K562 (cell line): ENCODE measurements at regions of chr13 and their contacts with region 1.

Region 1: GRCh38 chr13:73417015-73417623 is 358.3 kb downstream of the KLF5 start:
- DNase-seq: peak in 3 of 4 experiments; percentile 6 to 34 (median 32)
- ATAC-seq: peak; percentile 97
- H3K4me3 ChIP-seq: peak overlapping the region; percentile 19; the same call in 1 of the 2 replicates
- H3K27ac ChIP-seq: no peak overlapping the region
- H3K4me1 ChIP-seq: no peaks in the 10 kb centered on the region
- H3K27me3 ChIP-seq: no peaks in the 10 kb centered on the region
- CTCF ChIP-seq: peak; percentile 20 to 50 (median 40); a peak in 4 of 6 replicates
- EP300 ChIP-seq: no peak
- POLR2A ChIP-seq: no peak
- RAD21 ChIP-seq: peak; percentile 42 to 55

Region 2: GRCh38 chr13:72808917-72809500 is 608.1 kb before region 1 on chr13:
- CTCF ChIA-PET with region 1: no interaction called
- POLR2A ChIA-PET with region 1: no interaction called
- in situ Hi-C with region 1: loop called (anchors 25 kb)
- intact Hi-C with region 1: no loop called
- DNase-seq: peak in 3 of 4 experiments; percentile 9 to 12 (median 12)
- ATAC-seq: peak; percentile 36; the same call in 1 of the 3 replicates
- H3K4me3 ChIP-seq: no peak overlapping the region
- H3K27ac ChIP-seq: no peak overlapping the region; the same call in 2 of the 3 replicates
- H3K4me1 ChIP-seq: peaks cover 0 to 2% of the 10 kb centered on the region in 2 experiments; a peak in 1 of 5 replicates
- H3K27me3 ChIP-seq: no peaks in the 10 kb centered on the region
- CTCF ChIP-seq: peak in 1 of 3 experiments; percentile 42; a peak in 2 of 6 replicates
- EP300 ChIP-seq: no peak
- POLR2A ChIP-seq: no peak
- RAD21 ChIP-seq: no peak

Region 3: GRCh38 chr13:73505376-73505890 is 88.3 kb after region 1 on chr13:
- CTCF ChIA-PET with region 1: no interaction called
- POLR2A ChIA-PET with region 1: no interaction called
- in situ Hi-C with region 1: no loop called
- intact Hi-C with region 1: no loop called
- DNase-seq: no peak
- ATAC-seq: no peak
- H3K4me3 ChIP-seq: no peak overlapping the region
- H3K27ac ChIP-seq: no peak overlapping the region
- H3K4me1 ChIP-seq: no peaks in the 10 kb centered on the region
- H3K27me3 ChIP-seq: no peaks in the 10 kb centered on the region; a peak in 1 of 5 replicates
- CTCF ChIP-seq: no peak
- EP300 ChIP-seq: no peak
- POLR2A ChIP-seq: no peak
- RAD21 ChIP-seq: no peak

Region 4: DNA sequence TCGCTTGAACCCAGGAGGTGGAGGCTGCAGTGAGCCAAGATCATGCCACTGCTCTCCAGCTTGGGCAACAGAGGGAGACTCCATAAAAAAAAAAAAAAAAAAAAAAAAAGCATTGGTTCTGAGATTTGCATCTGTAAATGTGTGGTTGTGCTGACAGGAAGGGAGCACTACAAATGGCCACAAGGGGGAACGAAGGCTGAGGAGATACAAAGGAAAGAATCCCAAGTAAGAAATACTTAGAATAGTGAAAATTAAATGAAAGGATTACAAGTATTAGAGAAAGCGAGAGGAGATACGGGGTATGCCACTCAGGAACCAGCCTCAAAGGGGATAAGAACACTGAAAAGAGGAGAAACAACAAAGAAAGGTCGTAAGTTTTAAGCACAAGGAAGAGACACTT is 432.2 kb after region 1 on chr13:
- CTCF ChIA-PET with region 1: no interaction called
- POLR2A ChIA-PET with region 1: no interaction called
- in situ Hi-C with region 1: no loop called
- intact Hi-C with region 1: no loop called
- DNase-seq: no peak
- ATAC-seq: no peak
- H3K4me3 ChIP-seq: no peak overlapping the region
- H3K27ac ChIP-seq: no peak overlapping the region
- H3K4me1 ChIP-seq: no peaks in the 10 kb centered on the region
- H3K27me3 ChIP-seq: no peaks in the 10 kb centered on the region
- CTCF ChIP-seq: no peak
- EP300 ChIP-seq: no peak
- POLR2A ChIP-seq: no peak
- RAD21 ChIP-seq: no peak

Region 5: DNA sequence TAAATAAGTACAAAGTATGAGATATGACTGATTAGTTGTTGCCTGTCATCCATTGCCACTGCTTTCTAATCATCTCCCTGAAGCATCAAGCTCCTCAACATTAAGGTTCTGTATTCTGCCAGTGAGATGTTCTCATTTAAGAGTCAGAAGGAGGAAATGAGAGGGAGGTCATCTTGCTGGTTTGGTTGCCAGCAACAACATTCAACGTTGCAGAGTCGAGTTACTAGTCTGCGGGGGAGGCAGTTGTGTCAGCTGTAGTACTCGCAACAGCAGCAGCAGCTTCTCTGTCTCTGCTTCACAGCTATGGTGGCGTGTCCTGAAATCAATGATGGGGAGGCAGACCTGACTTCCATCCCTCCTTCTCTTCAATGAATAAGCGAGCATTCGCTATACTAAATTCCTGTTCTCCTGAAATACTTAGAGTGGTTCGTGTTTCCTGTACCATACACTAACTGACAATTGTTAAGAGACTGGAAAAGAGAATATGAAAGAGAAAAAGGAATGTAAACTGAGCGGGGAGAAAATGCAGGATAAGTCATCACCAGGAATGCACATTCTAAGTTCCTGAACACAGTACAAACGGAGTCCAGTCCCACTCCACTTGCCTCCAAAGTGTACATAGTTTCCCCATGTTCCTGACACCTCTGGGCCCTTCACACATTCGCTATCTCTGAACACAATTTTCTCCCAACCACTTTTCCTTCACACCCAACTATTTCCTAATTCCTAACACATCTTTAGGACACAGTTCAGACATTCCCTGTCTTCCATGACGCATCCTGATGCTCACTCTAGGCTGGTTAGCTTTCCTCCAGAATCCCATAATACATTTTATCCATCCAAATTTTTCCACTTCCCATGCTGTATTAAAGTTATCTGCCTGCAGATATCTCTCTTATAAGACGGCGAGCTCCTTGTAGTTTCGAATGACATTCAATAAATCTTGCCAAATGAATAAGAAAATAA is 454.1 kb after region 1 on chr13:
- CTCF ChIA-PET with region 1: no interaction called
- POLR2A ChIA-PET with region 1: no interaction called
- in situ Hi-C with region 1: no loop called
- intact Hi-C with region 1: no loop called
- DNase-seq: no peak
- ATAC-seq: no peak
- H3K4me3 ChIP-seq: no peak overlapping the region
- H3K27ac ChIP-seq: no peak overlapping the region
- H3K4me1 ChIP-seq: no peaks in the 10 kb centered on the region
- H3K27me3 ChIP-seq: no peaks in the 10 kb centered on the region
- CTCF ChIP-seq: no peak
- EP300 ChIP-seq: no peak
- POLR2A ChIP-seq: no peak
- RAD21 ChIP-seq: no peak